Head of caudate nucleus (tissue), 42 donors: ENCODE measurements at regions of chr16 and their contacts with region 1.

Region 1: DNA sequence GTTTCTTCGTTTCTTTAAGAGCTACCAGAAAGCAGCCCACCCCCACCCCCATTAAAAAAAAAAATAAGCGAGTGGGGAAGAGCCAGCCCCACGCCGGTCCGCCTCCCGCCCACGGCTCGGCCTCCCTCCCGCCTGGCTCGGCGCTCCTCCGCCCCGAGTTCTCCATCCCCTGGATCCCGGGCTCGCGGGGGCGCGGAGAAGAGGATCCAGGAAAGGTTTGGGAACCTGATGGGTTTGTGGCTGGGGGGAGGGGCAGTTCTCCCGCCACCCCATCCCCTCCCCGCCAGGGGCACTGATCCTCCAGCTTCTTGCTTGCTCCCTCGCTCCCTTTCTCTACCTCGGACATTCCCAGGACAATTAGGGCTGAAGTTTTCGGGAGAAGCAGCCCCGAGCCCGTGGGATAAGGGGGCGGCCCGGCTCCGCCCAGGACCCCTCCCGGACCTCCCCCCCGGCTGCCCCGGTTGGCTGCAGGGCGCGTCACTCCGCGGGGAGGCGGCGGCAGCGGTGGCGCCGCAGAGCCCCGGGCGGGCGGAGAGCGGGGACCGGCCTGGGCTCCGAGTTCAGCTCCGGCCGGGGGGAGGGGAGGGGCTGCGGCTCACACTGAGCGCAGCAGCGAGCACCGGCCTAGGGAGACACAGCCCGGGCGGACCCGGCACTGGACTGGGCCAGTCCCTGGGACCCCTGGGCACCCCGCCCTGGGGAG is 1.0 kb upstream of the SALL1 start:
- DNase-seq: peak; percentile 81 to 97 (median 94)

Region 2: DNA sequence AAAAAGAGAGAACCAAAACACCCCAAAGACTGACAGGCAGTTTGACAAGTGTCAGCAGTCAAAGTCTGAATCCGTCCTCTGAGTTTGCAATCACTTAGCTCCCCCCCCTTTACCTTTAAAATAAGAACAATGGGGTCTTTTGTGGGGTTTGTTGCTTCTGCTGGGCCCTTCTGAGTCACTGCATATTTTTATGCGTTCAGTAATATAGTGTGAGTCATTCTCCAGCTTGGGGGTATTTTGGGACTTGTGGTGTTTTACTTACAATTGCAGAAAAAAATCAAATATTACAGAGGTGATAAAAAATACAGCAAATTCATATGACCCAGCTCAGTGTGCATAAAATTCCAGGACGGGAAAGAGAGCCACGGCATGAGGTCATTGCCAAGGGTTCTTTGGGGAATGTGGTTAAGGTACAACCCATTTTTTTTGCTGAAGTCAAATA is 290.1 kb before region 1 on chr16:
- intact Hi-C with region 1: loop called (anchors 10 kb)
- DNase-seq: peak in 2 of 42 donors; percentile 27 to 56

Region 3: GRCh38 chr16:51440131-51440889 is 288.2 kb after region 1 on chr16:
- intact Hi-C with region 1: loop called (anchors 5 kb)
- DNase-seq: peak in 30 of 42 donors; percentile 5 to 81 (median 48)

Region 4: DNA sequence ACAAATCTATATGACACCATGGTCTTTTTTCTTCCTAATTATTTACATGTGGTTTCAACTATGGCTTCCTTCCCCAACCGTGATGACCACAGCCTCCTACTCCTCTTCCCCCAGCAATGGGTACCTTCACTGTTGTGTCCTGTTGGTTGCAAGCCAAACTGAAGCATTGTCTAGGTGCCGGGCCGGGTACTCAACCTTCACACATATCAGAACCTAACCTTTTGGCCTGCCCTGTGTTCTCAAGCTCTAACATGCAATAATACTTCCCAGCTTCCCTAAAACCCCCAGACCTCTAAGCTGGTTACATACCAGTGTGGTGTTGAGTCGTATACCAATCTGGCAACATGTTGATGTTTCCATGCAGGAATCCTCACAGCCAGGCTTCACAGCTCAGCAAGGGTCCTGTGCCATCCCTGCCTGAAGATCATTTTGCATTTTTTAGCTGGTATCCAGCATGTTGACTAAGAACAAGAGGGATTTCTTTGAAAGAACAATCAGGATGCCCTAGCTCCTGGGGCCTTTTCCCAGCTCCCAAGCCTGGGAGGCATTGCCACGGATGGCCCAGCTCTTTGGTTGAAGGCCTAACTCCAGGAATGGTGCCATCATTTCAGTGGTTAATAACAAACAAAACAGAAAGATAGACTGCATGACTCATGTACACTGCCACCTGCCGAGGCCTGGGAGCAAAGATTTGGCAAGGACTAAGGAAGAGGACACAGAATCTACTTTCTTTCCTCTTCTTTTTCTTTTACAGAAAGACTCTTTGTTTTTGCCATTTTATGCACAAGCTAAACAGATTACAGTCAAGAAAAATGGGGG is 372.7 kb after region 1 on chr16:
- intact Hi-C with region 1: loop called (anchors 10 kb)
- DNase-seq: peak in 35 of 42 donors; percentile 9 to 72 (median 38)